ENCODE measurements at regions of chr15 and their contacts with region 1.

Region 1: GRCh38 chr15:89206908-89207331 is 14.5 kb downstream of the RLBP1 start:
- DNase-seq: peak; percentile 86
- ATAC-seq: peak; percentile 80
- H3K4me3 Mint-ChIP-seq: no peak overlapping the region
- H3K27ac Mint-ChIP-seq: peak overlapping the region; percentile 39
- H3K4me1 Mint-ChIP-seq: peaks cover 36% of the 10 kb centered on the region
- H3K27me3 Mint-ChIP-seq: peaks cover 6% of the 10 kb centered on the region

Region 2: DNA sequence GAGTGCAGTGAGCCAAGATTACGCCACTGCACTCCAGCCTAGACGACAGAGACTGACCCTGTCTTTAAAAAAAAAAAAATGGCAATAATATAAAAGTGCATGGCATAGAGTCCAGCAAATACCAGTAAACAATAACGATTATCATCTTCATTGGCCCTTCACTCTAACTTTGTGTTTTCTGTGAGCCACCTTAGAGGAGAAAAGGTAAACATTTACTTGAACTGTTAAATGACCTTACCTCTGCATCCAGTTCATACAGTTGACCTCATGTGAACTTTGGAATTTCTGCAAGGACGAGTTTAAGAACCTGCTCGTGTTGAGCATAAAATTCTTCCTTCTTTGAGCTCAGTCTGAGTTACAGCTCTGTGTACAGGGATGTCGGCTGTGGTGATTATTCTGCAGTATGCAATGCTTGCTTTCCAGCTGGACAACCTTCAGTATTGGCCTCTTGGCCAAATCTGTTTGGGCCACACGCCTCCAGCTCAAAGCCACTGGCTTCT is 42.2 kb before region 1 on chr15:
- CTCF ChIA-PET with region 1: interaction called, 10 read pairs
- POLR2A ChIA-PET with region 1: no interaction called
- intact Hi-C with region 1: no loop called
- DNase-seq: no peak
- ATAC-seq: no peak
- H3K4me3 Mint-ChIP-seq: no peak overlapping the region
- H3K27ac Mint-ChIP-seq: no peak overlapping the region
- H3K4me1 Mint-ChIP-seq: peaks cover 38% of the 10 kb centered on the region
- H3K27me3 Mint-ChIP-seq: no peaks in the 10 kb centered on the region

Region 3: DNA sequence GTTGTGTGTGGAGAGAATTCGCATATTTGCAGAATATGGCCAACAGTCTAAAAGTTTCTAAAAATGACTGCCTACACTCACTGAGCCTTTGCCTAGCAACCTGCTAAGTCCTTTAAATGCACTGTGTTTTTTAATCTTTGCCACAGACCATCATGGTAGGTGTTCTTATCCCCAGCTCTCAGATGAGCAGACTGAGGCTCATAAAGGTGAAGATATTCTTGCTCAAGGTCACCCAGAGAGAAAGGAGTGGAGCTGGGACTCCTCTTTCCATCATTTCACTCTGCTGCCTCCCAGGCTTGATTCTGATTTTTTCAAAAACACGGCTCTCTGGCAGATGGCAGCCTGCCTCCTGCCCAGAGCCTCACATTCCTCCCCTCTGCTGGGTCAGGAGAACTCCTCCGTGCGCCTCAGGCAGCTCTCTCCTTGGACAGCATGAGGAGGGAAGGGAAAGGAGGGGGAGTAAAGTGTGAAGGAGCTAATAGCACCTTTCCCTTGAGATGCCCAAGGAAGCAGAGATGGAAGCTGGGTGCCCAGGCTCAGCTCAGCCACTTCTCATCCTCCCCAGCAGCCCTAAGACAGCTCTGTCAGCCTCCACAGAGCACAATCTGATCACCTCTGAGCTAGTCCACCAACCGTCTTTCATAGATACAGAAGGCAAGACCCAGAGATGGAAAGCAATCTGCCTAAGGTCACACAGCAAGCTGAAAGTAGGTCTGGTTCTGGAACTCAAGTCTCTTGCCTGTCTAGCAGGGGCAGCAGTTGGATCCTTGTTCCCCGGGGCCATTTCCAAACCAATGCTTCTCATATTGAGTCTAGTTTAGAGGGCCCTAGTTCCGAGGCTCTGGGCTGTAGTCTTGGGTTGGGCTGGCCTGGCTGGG is 10.8 kb after region 1 on chr15:
- CTCF ChIA-PET with region 1: interaction called, 10 read pairs
- POLR2A ChIA-PET with region 1: no interaction called
- intact Hi-C with region 1: no loop called
- DNase-seq: no peak
- ATAC-seq: no peak
- H3K4me3 Mint-ChIP-seq: no peak overlapping the region
- H3K27ac Mint-ChIP-seq: no peak overlapping the region
- H3K4me1 Mint-ChIP-seq: peaks cover 2% of the 10 kb centered on the region
- H3K27me3 Mint-ChIP-seq: no peaks in the 10 kb centered on the region

Region 4: GRCh38 chr15:89243691-89244471 is 37.0 kb after region 1 on chr15 and contains the start of gene FANCI:
- CTCF ChIA-PET with region 1: interaction called, 10 read pairs
- POLR2A ChIA-PET with region 1: no interaction called
- intact Hi-C with region 1: loop called (anchors 1 kb)
- DNase-seq: peak; percentile 98
- ATAC-seq: peak; percentile 96
- H3K4me3 Mint-ChIP-seq: peak within 1 kb of the TSS; percentile 93
- H3K27ac Mint-ChIP-seq: peak within 1 kb of the TSS; percentile 93
- H3K4me1 Mint-ChIP-seq: peaks cover 29% of the 10 kb centered on the region
- H3K27me3 Mint-ChIP-seq: no peaks in the 10 kb centered on the region
- total RNA-seq, gene FANCI: 150 to 199 TPM

Region 5: GRCh38 chr15:89307046-89307587 is 100.2 kb after region 1 on chr15:
- CTCF ChIA-PET with region 1: interaction called, 3 read pairs
- POLR2A ChIA-PET with region 1: interaction called, 9 read pairs
- intact Hi-C with region 1: loop called in 1 of 2 experiments (anchors 5 kb)
- DNase-seq: no peak
- ATAC-seq: no peak
- H3K4me3 Mint-ChIP-seq: no peak overlapping the region
- H3K27ac Mint-ChIP-seq: no peak overlapping the region
- H3K4me1 Mint-ChIP-seq: peaks cover under 1% of the 10 kb centered on the region
- H3K27me3 Mint-ChIP-seq: no peaks in the 10 kb centered on the region

Region 6: DNA sequence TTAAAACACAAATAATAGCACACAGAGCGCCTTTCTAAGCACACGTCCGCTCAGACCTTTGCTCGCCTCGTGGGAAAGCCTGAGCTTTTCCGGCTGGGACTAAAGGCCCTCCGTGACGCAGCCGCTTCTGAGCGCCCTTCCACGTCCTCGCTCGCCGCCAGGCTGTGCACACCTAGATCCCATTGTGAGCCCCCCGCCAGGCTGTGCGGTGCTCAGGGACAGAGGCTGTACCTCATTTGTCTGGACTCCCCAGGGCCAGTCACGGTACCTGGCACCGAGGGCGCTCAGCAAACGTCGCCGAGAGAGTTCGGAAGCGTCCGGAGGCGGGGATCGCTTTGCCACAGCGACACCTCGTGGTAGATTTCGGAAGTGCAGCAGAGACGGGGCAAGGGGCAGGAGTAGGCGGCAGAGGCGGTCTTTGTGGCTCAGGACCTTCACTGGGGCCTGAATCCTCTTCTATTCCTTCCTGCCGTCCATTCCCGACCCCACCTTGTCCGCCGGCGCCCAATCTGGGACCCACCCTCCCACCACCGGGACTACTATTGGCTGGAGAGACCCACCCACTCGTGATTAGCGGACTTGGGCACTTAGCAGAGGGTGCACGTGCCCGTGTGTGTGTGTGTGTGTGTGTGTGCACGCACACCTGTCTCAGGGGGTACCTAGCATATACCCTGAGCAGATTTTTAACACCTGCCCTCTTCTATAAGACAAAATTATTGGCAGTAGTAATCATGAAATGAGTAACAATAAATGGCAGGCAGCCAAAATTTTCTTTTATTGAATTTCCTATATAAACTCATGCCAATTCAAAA is 223.8 kb after region 1 on chr15:
- CTCF ChIA-PET with region 1: interaction called, 4 read pairs
- POLR2A ChIA-PET with region 1: no interaction called
- intact Hi-C with region 1: loop called (anchors 1 to 2 kb)
- DNase-seq: peak; percentile 94
- ATAC-seq: peak; percentile 96
- H3K4me3 Mint-ChIP-seq: peak overlapping the region; percentile 71
- H3K27ac Mint-ChIP-seq: peak overlapping the region; percentile 55
- H3K4me1 Mint-ChIP-seq: peaks cover 7% of the 10 kb centered on the region
- H3K27me3 Mint-ChIP-seq: peaks cover 18% of the 10 kb centered on the region

Measured in activated CD4-positive, alpha-beta T cell treated with anti-CD3 and anti-CD28 coated beads for 36 hours (primary cell).